Activated naive CD8-positive, alpha-beta T cell treated with anti-CD3 and anti-CD28 coated beads, Interleukin-2, amount 10 ng/mL, durations not matched to agents 7 days and 5 days (primary cell): ENCODE measurements at regions of chr1 and their contacts with region 1.

Region 1: GRCh38 chr1:159009704-159010361 is at the start of gene IFI16:
- DNase-seq: no peak
- ATAC-seq: peak; percentile 66
- H3K4me3 Mint-ChIP-seq: peak within 1 kb of the TSS; percentile 90
- H3K27ac Mint-ChIP-seq: peak within 1 kb of the TSS; percentile 96
- H3K4me1 Mint-ChIP-seq: peaks cover 39% of the 10 kb centered on the region
- H3K27me3 Mint-ChIP-seq: no peaks in the 10 kb centered on the region
- total RNA-seq, gene IFI16: 295 to 300 TPM

Region 2: GRCh38 chr1:158972841-158973240 is 37.0 kb before region 1 on chr1:
- POLR2A ChIA-PET with region 1: no interaction called
- DNase-seq: no peak
- ATAC-seq: no peak
- H3K4me3 Mint-ChIP-seq: no peak overlapping the region
- H3K27ac Mint-ChIP-seq: no peak overlapping the region
- H3K4me1 Mint-ChIP-seq: no peaks in the 10 kb centered on the region
- H3K27me3 Mint-ChIP-seq: no peaks in the 10 kb centered on the region

Region 3: DNA sequence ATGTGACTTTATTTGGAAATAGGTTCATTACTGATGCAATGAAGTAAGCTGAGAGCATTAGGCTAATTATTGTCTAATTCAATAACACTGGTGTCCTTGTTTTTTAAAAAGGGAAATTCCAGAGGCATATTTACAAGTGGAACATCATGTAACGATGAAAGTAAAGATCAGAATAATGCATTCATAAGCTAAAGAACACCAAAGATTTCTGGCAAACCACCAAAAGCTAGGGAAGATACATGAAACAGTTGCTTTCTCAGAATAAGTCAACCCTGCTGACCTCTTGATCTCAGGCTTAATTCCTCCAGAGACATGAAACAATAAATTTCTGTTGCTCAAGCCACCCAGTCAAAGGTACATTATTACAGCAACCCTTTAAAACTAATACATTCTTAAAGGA is 20.4 kb before region 1 on chr1:
- POLR2A ChIA-PET with region 1: no interaction called
- DNase-seq: no peak
- ATAC-seq: no peak
- H3K4me3 Mint-ChIP-seq: no peak overlapping the region
- H3K27ac Mint-ChIP-seq: no peak overlapping the region
- H3K4me1 Mint-ChIP-seq: peaks cover 2% of the 10 kb centered on the region
- H3K27me3 Mint-ChIP-seq: peaks cover under 1% of the 10 kb centered on the region

Region 4: GRCh38 chr1:159067699-159068621 is 58.1 kb after region 1 on chr1:
- POLR2A ChIA-PET with region 1: interaction called, 20 read pairs
- DNase-seq: no peak
- ATAC-seq: peak; percentile 51
- H3K4me3 Mint-ChIP-seq: peak overlapping the region; percentile 70
- H3K27ac Mint-ChIP-seq: peak overlapping the region; percentile 87
- H3K4me1 Mint-ChIP-seq: peaks cover 15% of the 10 kb centered on the region
- H3K27me3 Mint-ChIP-seq: peaks cover 3% of the 10 kb centered on the region

Region 5: DNA sequence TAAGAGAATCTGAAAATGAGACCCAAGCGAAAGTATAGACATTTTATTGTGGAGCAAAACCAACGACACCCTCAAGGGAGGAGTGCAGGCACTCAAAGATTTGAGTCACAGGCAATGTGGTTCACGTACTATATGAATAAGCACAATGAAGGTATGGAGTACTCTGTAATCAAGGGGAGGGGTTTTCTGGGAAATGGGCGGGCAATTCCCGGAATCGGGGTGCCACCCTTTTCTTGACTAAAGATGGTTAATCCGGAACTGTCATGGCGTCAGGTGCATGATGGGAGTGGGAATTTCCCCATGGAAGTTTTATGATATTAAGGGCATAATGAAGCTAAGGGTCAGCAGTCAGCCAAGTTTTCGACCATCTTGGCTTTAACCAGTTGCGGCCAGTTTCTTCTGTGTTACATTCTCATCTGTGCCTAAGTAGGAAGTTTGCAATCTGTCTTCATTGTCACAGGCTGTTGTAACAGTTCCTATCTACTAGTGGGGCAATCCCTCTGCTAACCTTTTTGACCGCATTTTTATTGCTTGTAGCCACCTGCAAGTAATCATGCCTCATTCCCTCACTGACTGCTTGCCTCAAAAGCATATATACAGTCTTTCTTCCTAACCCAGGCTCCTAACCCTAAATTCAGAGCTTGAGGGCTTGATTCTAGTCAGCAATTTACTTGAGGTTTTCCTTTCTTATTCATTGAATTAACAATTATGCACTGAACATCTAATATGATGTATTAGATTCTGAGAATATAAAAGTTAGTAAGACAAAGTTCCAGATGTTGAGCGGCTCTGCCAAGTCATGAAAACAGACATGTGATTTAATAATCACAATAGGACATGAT is 67.5 kb after region 1 on chr1:
- POLR2A ChIA-PET with region 1: interaction called, 19 read pairs
- DNase-seq: peak; percentile 82
- ATAC-seq: peak; percentile 88
- H3K4me3 Mint-ChIP-seq: peak overlapping the region; percentile 76
- H3K27ac Mint-ChIP-seq: peak overlapping the region; percentile 91
- H3K4me1 Mint-ChIP-seq: peaks cover 9% of the 10 kb centered on the region
- H3K27me3 Mint-ChIP-seq: peaks cover 13% of the 10 kb centered on the region

Region 6: DNA sequence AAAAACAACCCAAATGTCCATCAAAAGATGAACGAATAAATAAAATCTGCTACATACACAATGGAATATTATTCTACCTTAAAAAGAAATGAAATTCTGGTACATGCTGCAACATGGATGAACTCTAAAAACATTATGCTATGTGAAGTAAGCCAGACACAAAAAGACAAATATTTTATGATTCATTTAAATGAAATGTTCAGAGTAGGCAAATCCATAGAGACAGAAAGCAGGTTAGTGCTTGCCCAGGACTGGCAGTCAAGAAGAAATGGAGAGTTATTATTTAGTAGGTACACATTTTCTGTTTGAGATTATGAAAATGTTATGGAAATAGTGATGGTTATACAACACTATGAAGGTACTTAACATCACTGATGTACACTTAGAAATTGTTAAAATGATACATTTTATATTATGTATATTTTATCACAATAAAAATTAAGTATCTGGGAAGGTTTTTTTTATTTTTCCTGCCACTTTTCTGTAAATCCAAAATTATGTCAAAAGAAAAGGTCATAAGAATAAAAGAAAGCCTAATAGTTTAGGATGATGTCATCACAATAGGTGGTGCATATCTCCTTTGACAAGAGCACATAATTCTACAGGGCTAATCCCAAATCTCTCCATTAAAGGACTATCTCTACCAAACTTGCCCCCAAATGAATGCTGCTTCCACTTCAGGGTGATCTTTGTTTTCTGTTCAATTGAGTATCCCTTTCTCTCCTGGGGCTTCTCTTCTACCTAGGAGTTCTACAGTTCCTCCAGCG is 252.1 kb after region 1 on chr1:
- POLR2A ChIA-PET with region 1: no interaction called
- DNase-seq: no peak
- ATAC-seq: no peak
- H3K4me3 Mint-ChIP-seq: no peak overlapping the region
- H3K27ac Mint-ChIP-seq: no peak overlapping the region
- H3K4me1 Mint-ChIP-seq: peaks cover 6% of the 10 kb centered on the region
- H3K27me3 Mint-ChIP-seq: peaks cover 18% of the 10 kb centered on the region